ENCODE measurements at regions of chr6 and their contacts with region 1.

Region 1: DNA sequence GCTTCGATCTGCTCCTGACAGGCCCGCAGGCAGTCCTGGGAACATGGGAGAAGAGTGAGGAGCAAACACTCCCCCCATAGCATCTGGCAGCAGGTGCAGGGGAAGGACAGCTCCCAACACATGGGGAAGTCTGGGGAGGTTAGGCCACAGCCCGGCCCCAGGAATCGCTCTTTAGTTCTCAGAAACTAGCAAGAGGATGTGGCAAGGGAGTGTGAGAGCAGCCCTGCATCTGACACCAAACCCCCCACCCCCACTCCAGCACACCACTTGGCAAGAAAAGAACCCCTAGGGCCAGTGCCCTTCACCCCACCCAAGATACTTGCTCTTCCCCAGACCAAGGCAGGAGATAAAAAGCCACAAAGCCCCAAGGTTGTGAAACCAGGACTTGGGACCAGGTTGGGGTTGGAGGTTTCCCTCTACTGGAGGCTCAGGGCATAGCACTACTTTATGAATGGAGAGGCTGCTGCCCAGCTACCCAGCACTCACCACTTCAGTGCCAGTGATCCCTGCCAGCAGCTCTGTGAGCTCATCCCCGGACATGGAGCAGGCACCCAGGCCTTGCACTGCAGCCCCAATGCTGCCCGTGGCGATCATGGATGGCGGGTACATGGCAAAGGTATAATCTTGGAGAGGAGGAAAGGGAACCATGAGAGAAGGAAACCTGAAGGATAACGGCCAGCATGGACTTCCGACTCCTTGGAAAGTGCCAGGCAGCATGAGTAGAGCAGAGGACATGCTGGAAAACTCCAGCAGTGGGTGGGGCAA is 5.4 kb downstream of the CCND3 start:
- DNase-seq: peak; percentile 80
- H3K4me3 ChIP-seq: no peak overlapping the region
- H3K27ac ChIP-seq: no peak overlapping the region
- H3K4me1 ChIP-seq: peaks cover 34% of the 10 kb centered on the region
- H3K27me3 ChIP-seq: no peaks in the 10 kb centered on the region
- CTCF ChIP-seq: peak; percentile 85 to 95

Region 2: DNA sequence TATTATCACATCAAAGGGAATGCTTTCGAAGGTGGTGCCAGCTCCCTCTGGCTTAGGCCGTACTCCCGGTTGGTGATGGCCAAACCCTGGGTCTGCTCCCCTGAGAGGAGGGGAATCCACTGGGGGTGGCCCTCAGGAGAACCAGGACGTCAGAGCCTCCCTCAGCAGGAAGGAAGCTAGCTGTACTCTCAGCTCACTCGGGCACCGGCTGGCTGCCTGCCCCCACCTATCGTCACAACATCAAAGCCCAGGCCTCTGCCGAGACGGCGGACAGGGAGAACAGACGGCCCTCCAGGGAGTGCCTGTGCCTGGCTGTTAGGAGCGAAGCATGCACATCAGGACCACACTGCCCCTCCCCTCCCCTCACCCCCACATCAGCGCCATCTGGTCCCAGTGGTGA is 179.9 kb before region 1 on chr6:
- CTCF ChIA-PET with region 1: no interaction called
- dilution Hi-C with region 1: no loop called
- in situ Hi-C with region 1: no loop called
- intact Hi-C with region 1: no loop called
- DNase-seq: no peak
- H3K4me3 ChIP-seq: no peak overlapping the region
- H3K27ac ChIP-seq: no peak overlapping the region
- H3K4me1 ChIP-seq: no peaks in the 10 kb centered on the region
- H3K27me3 ChIP-seq: no peaks in the 10 kb centered on the region
- CTCF ChIP-seq: no peak

Region 3: GRCh38 chr6:41846666-41847237 is 89.5 kb before region 1 on chr6:
- CTCF ChIA-PET with region 1: interaction called, 3 read pairs
- dilution Hi-C with region 1: no loop called
- in situ Hi-C with region 1: no loop called
- intact Hi-C with region 1: loop called (anchors 1 kb)
- DNase-seq: peak; percentile 98
- H3K4me3 ChIP-seq: peak overlapping the region in 1 of 3 experiments; percentile 1
- H3K27ac ChIP-seq: peak overlapping the region; percentile 74
- H3K4me1 ChIP-seq: peaks cover 13% of the 10 kb centered on the region
- H3K27me3 ChIP-seq: no peaks in the 10 kb centered on the region
- CTCF ChIP-seq: peak; percentile 92 to 93

Region 4: DNA sequence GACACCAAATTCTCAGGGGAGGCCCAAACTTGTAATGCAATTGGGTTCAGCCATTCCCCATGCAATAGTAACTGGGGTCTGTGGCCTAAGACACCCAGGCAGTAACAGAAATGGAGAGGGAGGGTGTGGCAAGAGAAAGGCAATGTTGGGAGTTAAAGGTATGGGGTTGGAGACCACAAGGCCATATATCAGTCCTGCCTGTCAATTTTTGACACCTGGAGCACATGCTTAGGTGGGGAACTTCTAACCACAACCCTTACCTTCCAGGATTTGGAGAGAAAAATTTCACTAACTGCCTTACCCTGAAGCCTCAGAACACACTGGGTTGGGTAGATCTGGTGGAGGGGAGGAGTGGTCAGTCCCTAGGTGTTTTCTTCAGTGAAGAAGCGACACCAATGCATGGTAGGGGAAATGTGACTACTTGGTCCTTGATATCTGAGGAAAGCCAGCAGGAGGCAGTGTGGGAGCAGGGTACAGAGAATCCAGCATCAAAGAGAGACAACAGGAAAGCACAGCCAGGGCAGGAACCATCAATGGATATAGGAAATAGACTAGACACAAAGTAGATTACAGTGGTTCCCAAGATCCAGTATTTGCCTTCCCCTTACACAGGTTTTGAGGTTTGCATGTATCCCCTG is 34.3 kb before region 1 on chr6:
- CTCF ChIA-PET with region 1: no interaction called
- dilution Hi-C with region 1: no loop called
- in situ Hi-C with region 1: no loop called
- intact Hi-C with region 1: loop called (anchors 1 kb)
- DNase-seq: no peak
- H3K4me3 ChIP-seq: no peak overlapping the region
- H3K27ac ChIP-seq: no peak overlapping the region
- H3K4me1 ChIP-seq: no peaks in the 10 kb centered on the region
- H3K27me3 ChIP-seq: no peaks in the 10 kb centered on the region
- CTCF ChIP-seq: peak; percentile 32 to 43

Region 5: DNA sequence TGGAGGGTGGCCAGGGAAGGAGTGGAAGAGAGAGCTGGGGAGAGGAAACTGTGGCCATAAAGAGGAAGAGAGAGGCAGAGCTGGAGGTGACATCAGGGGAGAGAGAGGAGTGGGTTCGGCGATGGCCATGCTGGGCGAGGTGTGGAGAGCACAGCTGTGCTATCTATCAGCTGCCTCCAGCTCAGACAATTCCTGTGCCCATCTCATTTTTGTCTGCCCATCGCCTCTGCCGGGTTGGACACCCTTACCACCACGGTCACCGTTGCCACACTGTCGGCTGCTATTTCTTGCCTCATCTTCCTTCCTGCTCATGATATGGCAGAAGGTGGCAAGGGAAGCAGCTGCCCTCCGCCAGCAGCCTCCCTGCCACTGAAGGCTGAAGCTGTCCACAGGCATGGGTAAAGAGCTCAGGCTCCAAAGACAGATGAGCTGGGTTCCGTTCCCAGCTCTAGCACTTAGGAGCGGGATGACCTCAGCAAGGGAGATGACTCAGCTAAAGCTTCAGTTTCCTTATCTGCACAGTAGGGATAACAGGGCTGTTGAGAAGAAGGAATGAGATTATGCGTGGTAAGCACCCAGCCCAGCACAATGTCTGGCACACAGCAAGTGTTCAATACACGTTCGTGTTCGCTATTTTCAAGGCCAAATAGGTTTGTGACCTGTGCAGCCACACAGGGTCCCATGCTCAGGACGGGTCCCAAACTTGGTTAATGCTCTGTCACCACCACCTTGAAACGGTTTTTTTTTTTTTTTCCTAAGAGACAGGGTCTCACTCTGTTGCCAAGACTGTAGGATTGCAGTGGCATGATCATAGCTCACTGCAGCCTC is 92.2 kb after region 1 on chr6:
- CTCF ChIA-PET with region 1: no interaction called
- dilution Hi-C with region 1: loop called (anchors 5 kb)
- in situ Hi-C with region 1: no loop called
- intact Hi-C with region 1: no loop called
- DNase-seq: no peak
- H3K4me3 ChIP-seq: no peak overlapping the region
- H3K27ac ChIP-seq: no peak overlapping the region
- H3K4me1 ChIP-seq: peaks cover 4% of the 10 kb centered on the region
- H3K27me3 ChIP-seq: no peaks in the 10 kb centered on the region
- CTCF ChIP-seq: no peak

Region 6: DNA sequence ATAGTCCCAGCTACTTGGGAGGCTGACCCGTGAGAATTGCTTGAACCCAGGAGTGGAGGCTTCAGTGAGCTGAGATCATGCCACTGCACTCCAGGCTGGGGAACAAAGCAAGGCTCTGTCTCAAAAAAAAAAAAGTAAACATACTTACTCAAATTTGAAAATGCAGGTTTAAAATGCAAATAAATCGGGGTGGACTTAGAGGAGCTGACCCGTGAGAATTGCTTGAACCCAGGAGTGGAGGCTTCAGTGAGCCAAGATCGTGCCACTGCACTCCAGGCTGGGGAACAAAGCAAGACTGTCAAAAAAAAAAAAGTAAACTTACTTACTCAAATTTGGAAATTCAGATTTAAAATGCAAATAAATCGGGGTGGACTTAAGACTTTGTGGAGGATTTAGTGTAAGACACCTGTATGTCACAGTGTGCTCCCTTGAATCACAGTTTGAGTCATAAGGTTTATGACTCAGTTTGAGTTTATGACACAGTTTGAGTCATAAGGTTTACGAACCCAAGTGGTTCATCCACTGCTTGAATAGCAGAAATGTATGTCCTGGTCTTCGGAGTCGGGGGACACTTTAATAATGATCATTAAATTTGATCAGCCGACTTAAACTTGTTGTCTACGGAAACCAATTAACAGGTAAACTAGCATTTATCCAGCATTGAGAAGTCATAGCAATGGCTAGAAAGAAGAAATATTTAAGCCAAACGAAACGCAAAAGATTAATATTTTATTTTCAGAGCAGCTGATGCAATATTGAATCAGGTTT is 288.2 kb after region 1 on chr6:
- CTCF ChIA-PET with region 1: no interaction called
- dilution Hi-C with region 1: no loop called
- in situ Hi-C with region 1: no loop called
- intact Hi-C with region 1: loop called (anchors 10 kb)
- DNase-seq: peak; percentile 94
- H3K4me3 ChIP-seq: peak overlapping the region; percentile 1 to 19 (median 4)
- H3K27ac ChIP-seq: peak overlapping the region; percentile 95
- H3K4me1 ChIP-seq: peaks cover 66% of the 10 kb centered on the region
- H3K27me3 ChIP-seq: no peaks in the 10 kb centered on the region
- CTCF ChIP-seq: no peak